ENCODE measurements at regions of chr2 and their contacts with region 1.

Region 1: GRCh38 chr2:191165176-191165643 is 14.4 kb upstream of the STAT4 start:
- DNase-seq: no peak

Region 2: DNA sequence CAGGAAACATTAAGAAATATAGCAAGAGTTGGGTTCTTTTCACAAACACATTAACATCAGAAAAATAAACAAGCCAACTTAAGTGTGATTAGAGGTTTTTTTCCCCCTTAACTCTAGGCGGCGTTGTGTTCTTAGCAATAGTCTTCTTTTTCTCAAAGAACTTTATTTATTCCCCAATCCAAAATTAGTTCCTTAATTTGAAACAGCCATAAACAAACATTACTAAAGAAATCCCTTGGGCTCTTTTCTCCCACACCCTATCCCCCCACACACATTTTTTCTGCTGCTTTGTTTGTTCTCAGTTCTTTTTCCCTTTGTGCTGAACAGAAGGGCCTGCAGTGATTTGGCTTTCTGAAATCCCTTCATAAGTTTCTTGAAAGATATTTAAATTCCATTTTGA is 66.8 kb after region 1 on chr2:
- intact Hi-C with region 1: loop called (anchors 5 kb)
- DNase-seq: no peak

Region 3: GRCh38 chr2:191376981-191377629 is 211.9 kb after region 1 on chr2:
- intact Hi-C with region 1: loop called (anchors 10 kb)
- DNase-seq: peak; percentile 80

Region 4: GRCh38 chr2:191501561-191502168 is 336.5 kb after region 1 on chr2:
- intact Hi-C with region 1: loop called (anchors 5 kb)
- DNase-seq: no peak

Region 5: DNA sequence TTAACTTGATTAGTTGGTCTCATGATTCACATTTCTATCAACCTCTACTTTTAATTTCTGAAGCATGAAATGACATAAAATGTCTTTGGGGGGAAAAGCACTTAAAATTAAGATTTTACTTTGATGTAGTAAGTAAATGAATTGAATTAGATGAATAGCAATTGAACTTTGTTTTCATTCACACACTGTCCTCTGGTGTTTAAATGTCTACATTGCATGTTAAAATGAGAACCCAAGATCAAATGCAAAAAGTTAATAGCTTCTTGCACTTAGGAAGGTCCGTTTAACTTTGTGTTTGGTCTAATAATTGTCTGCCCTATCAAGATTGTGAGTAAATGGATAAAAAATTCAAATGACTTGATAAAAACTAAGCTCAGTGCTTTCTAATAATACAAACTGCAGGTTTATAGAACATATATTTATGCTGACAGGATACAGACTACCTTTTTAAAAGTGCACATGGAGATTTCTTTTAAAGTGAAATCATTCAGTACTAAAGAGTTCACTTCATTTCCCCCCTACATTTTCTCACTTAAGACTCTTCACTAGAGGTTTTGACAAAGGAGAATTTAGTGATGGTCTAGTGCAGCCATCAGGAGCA is 356.5 kb after region 1 on chr2:
- intact Hi-C with region 1: loop called (anchors 2 kb)
- DNase-seq: no peak

Region 6: GRCh38 chr2:191677646-191678436 is 512.6 kb after region 1 on chr2 and contains the start of gene NABP1:
- intact Hi-C with region 1: loop called (anchors 10 kb)
- DNase-seq: peak; percentile 100
- total RNA-seq, gene NABP1: 6.6 TPM

Measured in cardiac septum (tissue), 1 donor.